ENCODE measurements at regions of chr18 and their contacts with region 1.

Region 1: GRCh38 chr18:31685097-31686082 is 1.0 kb upstream of the B4GALT6 start:
- DNase-seq: peak; percentile 82
- H3K4me3 ChIP-seq: peak overlapping the region; percentile 75
- H3K27ac ChIP-seq: peak overlapping the region; percentile 86
- H3K4me1 ChIP-seq: peaks cover 37% of the 10 kb centered on the region
- CTCF ChIP-seq: 0 out of 2 replicates have a peak, but pooled peaks have one; percentile 34

Region 2: DNA sequence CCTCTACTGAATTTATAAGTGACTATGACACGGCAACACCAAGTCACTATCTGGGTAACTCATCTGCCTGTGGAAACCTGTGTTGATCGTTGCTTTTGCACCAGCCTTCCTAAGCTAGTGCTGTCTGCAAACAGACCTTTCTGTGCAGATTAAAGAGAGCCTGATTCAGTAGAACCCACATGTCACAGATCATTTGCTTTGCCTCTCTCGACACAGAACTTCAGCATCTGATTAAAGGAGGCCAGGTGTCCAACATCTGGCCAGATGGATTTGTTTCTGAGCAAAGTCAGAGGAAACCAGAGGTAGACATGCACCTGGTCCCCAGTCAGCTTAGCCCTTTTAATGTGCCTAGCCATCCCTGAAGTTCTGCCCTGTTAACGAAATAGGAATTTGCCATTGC is 108.7 kb before region 1 on chr18:
- CTCF ChIA-PET with region 1: no interaction called
- POLR2A ChIA-PET with region 1: no interaction called
- intact Hi-C with region 1: loop called (anchors 2 kb)
- DNase-seq: peak; percentile 92
- H3K4me3 ChIP-seq: peak overlapping the region; percentile 32
- H3K27ac ChIP-seq: peak overlapping the region; percentile 99
- H3K4me1 ChIP-seq: peaks cover 86% of the 10 kb centered on the region
- CTCF ChIP-seq: no peak

Region 3: GRCh38 chr18:32092422-32093101 is 407.2 kb after region 1 on chr18:
- CTCF ChIA-PET with region 1: no interaction called
- POLR2A ChIA-PET with region 1: no interaction called
- intact Hi-C with region 1: loop called (anchors 5 kb)
- DNase-seq: peak; percentile 91
- H3K4me3 ChIP-seq: peak overlapping the region; percentile 96
- H3K27ac ChIP-seq: peak overlapping the region; percentile 97
- H3K4me1 ChIP-seq: peaks cover 25% of the 10 kb centered on the region
- CTCF ChIP-seq: no peak

Measured in OCI-LY7 (cell line).